Activated naive CD4-positive, alpha-beta T cell treated with anti-CD3 and anti-CD28 coated beads for 36 hours (primary cell): ENCODE measurements at regions of chr2 and their contacts with region 1.

Region 1: GRCh38 chr2:50492477-50492851 is 539.5 kb downstream of the NRXN1 start:
- DNase-seq: peak; percentile 39
- H3K4me3 Mint-ChIP-seq: no peak overlapping the region
- H3K27ac Mint-ChIP-seq: no peak overlapping the region
- H3K4me1 Mint-ChIP-seq: peaks cover 11% of the 10 kb centered on the region
- H3K27me3 Mint-ChIP-seq: peaks cover 5% of the 10 kb centered on the region

Region 2: GRCh38 chr2:48600204-48600813 is 1892.2 kb before region 1 on chr2:
- CTCF ChIA-PET with region 1: no interaction called
- intact Hi-C with region 1: loop called (anchors 1 kb)
- DNase-seq: no peak
- H3K4me3 Mint-ChIP-seq: no peak overlapping the region
- H3K27ac Mint-ChIP-seq: no peak overlapping the region
- H3K4me1 Mint-ChIP-seq: no peaks in the 10 kb centered on the region
- H3K27me3 Mint-ChIP-seq: peaks cover 4% of the 10 kb centered on the region

Region 3: GRCh38 chr2:49465157-49465831 is 1027.2 kb before region 1 on chr2:
- CTCF ChIA-PET with region 1: no interaction called
- intact Hi-C with region 1: no loop called
- DNase-seq: no peak
- H3K4me3 Mint-ChIP-seq: no peak overlapping the region
- H3K27ac Mint-ChIP-seq: no peak overlapping the region
- H3K4me1 Mint-ChIP-seq: no peaks in the 10 kb centered on the region
- H3K27me3 Mint-ChIP-seq: no peaks in the 10 kb centered on the region

Region 4: GRCh38 chr2:49687918-49688317 is 804.5 kb before region 1 on chr2:
- CTCF ChIA-PET with region 1: no interaction called
- intact Hi-C with region 1: loop called (anchors 5 kb)
- DNase-seq: no peak
- H3K4me3 Mint-ChIP-seq: no peak overlapping the region
- H3K27ac Mint-ChIP-seq: no peak overlapping the region
- H3K4me1 Mint-ChIP-seq: no peaks in the 10 kb centered on the region
- H3K27me3 Mint-ChIP-seq: no peaks in the 10 kb centered on the region

Region 5: DNA sequence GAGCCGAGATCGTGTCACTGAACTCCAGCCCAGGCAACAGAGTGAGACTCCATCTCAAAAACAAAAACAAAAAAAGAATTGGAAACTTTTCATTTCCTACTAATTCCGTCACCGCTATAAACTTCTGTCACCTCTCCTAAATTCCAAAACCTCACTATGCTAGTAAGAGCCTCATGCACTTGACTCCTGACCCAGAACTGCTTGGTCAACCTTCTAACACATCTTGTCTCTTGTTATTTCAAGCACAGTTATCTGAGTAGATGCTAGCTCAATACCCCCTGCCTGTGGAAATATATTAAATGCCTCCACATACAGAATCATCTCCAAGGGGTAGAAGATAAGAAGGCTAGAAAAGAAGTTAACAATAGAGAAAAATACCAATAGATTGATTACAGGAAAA is 163.8 kb before region 1 on chr2:
- CTCF ChIA-PET with region 1: no interaction called
- intact Hi-C with region 1: no loop called
- DNase-seq: no peak
- H3K4me3 Mint-ChIP-seq: no peak overlapping the region
- H3K27ac Mint-ChIP-seq: no peak overlapping the region
- H3K4me1 Mint-ChIP-seq: no peaks in the 10 kb centered on the region
- H3K27me3 Mint-ChIP-seq: no peaks in the 10 kb centered on the region

Region 6: GRCh38 chr2:50535971-50536759 is 43.7 kb after region 1 on chr2:
- CTCF ChIA-PET with region 1: no interaction called
- intact Hi-C with region 1: no loop called
- DNase-seq: no peak
- H3K4me3 Mint-ChIP-seq: no peak overlapping the region
- H3K27ac Mint-ChIP-seq: no peak overlapping the region
- H3K4me1 Mint-ChIP-seq: no peaks in the 10 kb centered on the region
- H3K27me3 Mint-ChIP-seq: peaks cover under 1% of the 10 kb centered on the region

Region 7: GRCh38 chr2:50885948-50886347 is 393.5 kb after region 1 on chr2:
- CTCF ChIA-PET with region 1: no interaction called
- intact Hi-C with region 1: no loop called
- DNase-seq: no peak
- H3K4me3 Mint-ChIP-seq: no peak overlapping the region
- H3K27ac Mint-ChIP-seq: no peak overlapping the region
- H3K4me1 Mint-ChIP-seq: no peaks in the 10 kb centered on the region
- H3K27me3 Mint-ChIP-seq: no peaks in the 10 kb centered on the region